ENCODE measurements at regions of chr10 and their contacts with region 1.

Region 1: DNA sequence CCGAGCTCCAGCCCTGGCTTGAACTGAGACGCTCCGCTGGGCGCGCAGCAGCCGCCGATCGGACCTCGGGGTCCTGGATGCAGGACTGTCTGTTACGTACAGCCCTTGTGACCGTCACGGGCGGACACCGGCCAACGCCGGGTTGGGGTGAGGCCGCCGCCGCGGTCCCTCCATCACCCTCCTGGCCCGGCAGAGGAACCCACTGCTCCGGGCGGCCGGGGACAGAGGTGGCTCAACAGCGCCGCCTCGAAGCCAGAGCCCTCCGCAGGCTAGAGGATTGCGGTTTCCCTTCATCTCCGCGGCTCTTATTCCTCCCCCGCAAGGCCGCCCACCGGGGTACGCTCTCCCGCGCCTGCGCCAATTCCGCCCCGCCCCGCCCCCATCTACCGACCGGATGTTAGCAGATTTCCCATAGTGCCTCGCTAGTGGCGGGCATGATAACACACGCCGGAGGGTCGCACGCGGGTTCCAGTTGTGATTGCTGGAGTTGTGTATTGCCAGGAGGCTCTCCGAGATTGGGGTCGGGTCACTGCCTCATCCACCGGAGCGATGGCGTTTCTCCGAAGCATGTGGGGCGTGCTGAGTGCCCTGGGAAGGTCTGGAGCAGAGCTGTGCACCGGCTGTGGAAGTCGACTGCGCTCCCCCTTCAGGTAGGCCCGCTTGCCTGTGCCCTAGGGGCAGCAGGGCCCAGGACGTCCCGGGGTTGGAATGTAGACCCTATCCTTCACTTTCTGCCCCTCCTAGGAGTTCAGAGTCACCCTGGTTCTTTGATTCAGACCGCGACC is at the start of gene TFAM:
- DNase-seq: peak; percentile 98
- ATAC-seq: peak; percentile 99
- total RNA-seq, gene TFAM: 26.4 TPM

Region 2: GRCh38 chr10:58209669-58210068 is 175.5 kb before region 1 on chr10:
- intact Hi-C with region 1: no loop called
- DNase-seq: peak; percentile 65
- ATAC-seq: peak; percentile 86

Region 3: DNA sequence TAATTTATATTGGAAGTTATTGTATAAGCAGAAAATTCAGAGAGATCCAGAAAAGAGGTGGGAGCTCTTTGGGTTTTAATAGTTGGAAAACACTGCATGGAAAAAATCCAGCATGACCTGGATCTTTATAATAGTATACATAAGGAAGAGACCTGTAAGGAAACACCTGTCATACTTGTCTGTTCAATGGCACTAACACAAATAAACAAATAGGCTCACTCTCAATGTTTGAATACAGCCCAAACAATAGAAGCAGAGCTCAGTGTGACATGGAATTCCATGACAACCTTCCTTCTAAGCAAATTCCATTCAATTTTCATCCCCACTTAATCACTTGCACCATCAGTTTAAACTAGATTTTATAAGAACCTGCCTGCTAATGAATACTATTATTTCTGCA is 84.5 kb before region 1 on chr10:
- intact Hi-C with region 1: loop called (anchors 10 kb)
- DNase-seq: no peak
- ATAC-seq: no peak

Region 4: GRCh38 chr10:58334817-58335305 is 50.3 kb before region 1 on chr10 and contains the start of gene UBE2D1:
- intact Hi-C with region 1: loop called (anchors 5 kb)
- DNase-seq: peak; percentile 96
- ATAC-seq: peak; percentile 98
- total RNA-seq, gene UBE2D1: 61.2 TPM